ENCODE measurements at regions of chr12 and their contacts with region 1.

Region 1: GRCh38 chr12:84874125-84874824 is 38.3 kb downstream of the SLC6A15 start:
- DNase-seq: peak in 3 of 14 experiments; percentile 39 to 45 (median 43)
- ATAC-seq: peak; percentile 39
- H3K4me3 ChIP-seq: no peak overlapping the region
- H3K4me3 Mint-ChIP-seq: no peak overlapping the region
- H3K27ac ChIP-seq: no peak overlapping the region
- H3K27ac Mint-ChIP-seq: no peak overlapping the region
- H3K4me1 ChIP-seq: no peaks in the 10 kb centered on the region
- H3K4me1 Mint-ChIP-seq: no peaks in the 10 kb centered on the region
- H3K27me3 ChIP-seq: no peaks in the 10 kb centered on the region
- H3K27me3 Mint-ChIP-seq: no peaks in the 10 kb centered on the region
- CTCF ChIP-seq: peak; percentile 92

Region 2: GRCh38 chr12:84904051-84904450 is 29.8 kb after region 1 on chr12:
- CTCF ChIA-PET with region 1: no interaction called
- POLR2A ChIA-PET with region 1: no interaction called
- intact Hi-C with region 1: no loop called
- DNase-seq: no peak
- ATAC-seq: no peak
- H3K4me3 ChIP-seq: no peak overlapping the region
- H3K4me3 Mint-ChIP-seq: no peak overlapping the region
- H3K27ac ChIP-seq: no peak overlapping the region
- H3K27ac Mint-ChIP-seq: no peak overlapping the region
- H3K4me1 ChIP-seq: no peaks in the 10 kb centered on the region
- H3K4me1 Mint-ChIP-seq: no peaks in the 10 kb centered on the region
- H3K27me3 ChIP-seq: no peaks in the 10 kb centered on the region
- H3K27me3 Mint-ChIP-seq: peaks cover 11% of the 10 kb centered on the region
- CTCF ChIP-seq: no peak

Region 3: GRCh38 chr12:84924981-84925380 is 50.7 kb after region 1 on chr12:
- CTCF ChIA-PET with region 1: no interaction called
- POLR2A ChIA-PET with region 1: no interaction called
- intact Hi-C with region 1: no loop called
- DNase-seq: no peak
- ATAC-seq: no peak
- H3K4me3 ChIP-seq: no peak overlapping the region
- H3K4me3 Mint-ChIP-seq: no peak overlapping the region
- H3K27ac ChIP-seq: no peak overlapping the region
- H3K27ac Mint-ChIP-seq: no peak overlapping the region
- H3K4me1 ChIP-seq: no peaks in the 10 kb centered on the region
- H3K4me1 Mint-ChIP-seq: no peaks in the 10 kb centered on the region
- H3K27me3 ChIP-seq: no peaks in the 10 kb centered on the region
- H3K27me3 Mint-ChIP-seq: peaks cover 12% of the 10 kb centered on the region
- CTCF ChIP-seq: no peak

Region 4: GRCh38 chr12:84986586-84986985 is 112.3 kb after region 1 on chr12:
- CTCF ChIA-PET with region 1: no interaction called
- POLR2A ChIA-PET with region 1: no interaction called
- intact Hi-C with region 1: no loop called
- DNase-seq: no peak
- ATAC-seq: no peak
- H3K4me3 ChIP-seq: no peak overlapping the region
- H3K4me3 Mint-ChIP-seq: no peak overlapping the region
- H3K27ac ChIP-seq: no peak overlapping the region
- H3K27ac Mint-ChIP-seq: no peak overlapping the region
- H3K4me1 ChIP-seq: no peaks in the 10 kb centered on the region
- H3K4me1 Mint-ChIP-seq: no peaks in the 10 kb centered on the region
- H3K27me3 ChIP-seq: no peaks in the 10 kb centered on the region
- H3K27me3 Mint-ChIP-seq: no peaks in the 10 kb centered on the region
- CTCF ChIP-seq: no peak

Region 5: GRCh38 chr12:85029456-85029855 is 155.2 kb after region 1 on chr12:
- CTCF ChIA-PET with region 1: no interaction called
- POLR2A ChIA-PET with region 1: interaction called, 3 read pairs
- intact Hi-C with region 1: loop called (anchors 1 to 2 kb)
- DNase-seq: peak in 1 of 14 experiments; percentile 16
- ATAC-seq: no peak
- H3K4me3 ChIP-seq: no peak overlapping the region
- H3K4me3 Mint-ChIP-seq: no peak overlapping the region
- H3K27ac ChIP-seq: no peak overlapping the region
- H3K27ac Mint-ChIP-seq: no peak overlapping the region
- H3K4me1 ChIP-seq: no peaks in the 10 kb centered on the region
- H3K4me1 Mint-ChIP-seq: no peaks in the 10 kb centered on the region
- H3K27me3 ChIP-seq: no peaks in the 10 kb centered on the region
- H3K27me3 Mint-ChIP-seq: peaks cover 10% of the 10 kb centered on the region
- CTCF ChIP-seq: peak; percentile 49

Region 6: DNA sequence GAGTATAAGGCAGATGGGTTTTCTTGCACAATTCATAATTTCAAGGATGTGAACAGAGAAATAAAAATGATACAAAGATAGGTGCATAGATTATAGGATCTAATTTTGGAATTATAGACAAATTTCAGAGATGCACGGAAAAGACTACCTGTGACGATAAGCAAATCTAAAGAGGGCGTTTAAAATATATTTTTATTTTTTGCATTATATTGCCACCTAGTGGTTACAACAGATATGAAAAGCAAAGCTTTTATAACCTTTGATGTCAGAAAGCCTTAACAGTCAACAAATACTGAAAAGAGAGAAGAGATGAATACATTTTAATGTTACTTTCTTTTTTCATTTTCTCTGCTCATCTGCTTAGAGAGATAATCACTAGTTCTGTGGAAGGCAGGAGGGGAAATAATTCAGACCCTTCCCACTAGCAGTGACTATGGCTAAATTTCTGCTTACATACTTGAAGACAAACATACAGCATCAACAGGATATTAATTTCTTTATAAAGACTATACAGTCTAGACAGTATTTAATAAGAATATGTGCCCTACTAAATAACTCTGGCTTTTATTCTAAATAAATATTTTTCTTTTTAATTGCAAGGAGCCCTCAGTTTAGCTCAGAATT is 1046.2 kb after region 1 on chr12:
- CTCF ChIA-PET with region 1: no interaction called
- POLR2A ChIA-PET with region 1: no interaction called
- intact Hi-C with region 1: loop called (anchors 2 to 10 kb)
- DNase-seq: peak in 1 of 14 experiments; percentile 1
- ATAC-seq: no peak
- H3K4me3 ChIP-seq: no peak overlapping the region
- H3K4me3 Mint-ChIP-seq: no peak overlapping the region
- H3K27ac ChIP-seq: no peak overlapping the region
- H3K27ac Mint-ChIP-seq: no peak overlapping the region
- H3K4me1 ChIP-seq: no peaks in the 10 kb centered on the region
- H3K4me1 Mint-ChIP-seq: no peaks in the 10 kb centered on the region
- H3K27me3 ChIP-seq: no peaks in the 10 kb centered on the region
- H3K27me3 Mint-ChIP-seq: no peaks in the 10 kb centered on the region
- CTCF ChIP-seq: peak; percentile 74

Measured in CD4-positive, alpha-beta T cell (primary cell).